CD4-positive, alpha-beta T cell (primary cell): ENCODE measurements at regions of chr12 and their contacts with region 1.

Region 1: GRCh38 chr12:47021298-47021697 is 58.1 kb upstream of the PCED1B start:
- DNase-seq: peak in 3 of 14 experiments; percentile 57 to 72 (median 67)
- ATAC-seq: peak; percentile 39
- H3K4me3 ChIP-seq: no peak overlapping the region
- H3K4me3 Mint-ChIP-seq: no peak overlapping the region
- H3K27ac ChIP-seq: no peak overlapping the region
- H3K27ac Mint-ChIP-seq: no peak overlapping the region
- H3K4me1 ChIP-seq: no peaks in the 10 kb centered on the region
- H3K4me1 Mint-ChIP-seq: no peaks in the 10 kb centered on the region
- H3K27me3 ChIP-seq: no peaks in the 10 kb centered on the region
- H3K27me3 Mint-ChIP-seq: peaks cover 20% of the 10 kb centered on the region
- CTCF ChIP-seq: peak; percentile 83

Region 2: DNA sequence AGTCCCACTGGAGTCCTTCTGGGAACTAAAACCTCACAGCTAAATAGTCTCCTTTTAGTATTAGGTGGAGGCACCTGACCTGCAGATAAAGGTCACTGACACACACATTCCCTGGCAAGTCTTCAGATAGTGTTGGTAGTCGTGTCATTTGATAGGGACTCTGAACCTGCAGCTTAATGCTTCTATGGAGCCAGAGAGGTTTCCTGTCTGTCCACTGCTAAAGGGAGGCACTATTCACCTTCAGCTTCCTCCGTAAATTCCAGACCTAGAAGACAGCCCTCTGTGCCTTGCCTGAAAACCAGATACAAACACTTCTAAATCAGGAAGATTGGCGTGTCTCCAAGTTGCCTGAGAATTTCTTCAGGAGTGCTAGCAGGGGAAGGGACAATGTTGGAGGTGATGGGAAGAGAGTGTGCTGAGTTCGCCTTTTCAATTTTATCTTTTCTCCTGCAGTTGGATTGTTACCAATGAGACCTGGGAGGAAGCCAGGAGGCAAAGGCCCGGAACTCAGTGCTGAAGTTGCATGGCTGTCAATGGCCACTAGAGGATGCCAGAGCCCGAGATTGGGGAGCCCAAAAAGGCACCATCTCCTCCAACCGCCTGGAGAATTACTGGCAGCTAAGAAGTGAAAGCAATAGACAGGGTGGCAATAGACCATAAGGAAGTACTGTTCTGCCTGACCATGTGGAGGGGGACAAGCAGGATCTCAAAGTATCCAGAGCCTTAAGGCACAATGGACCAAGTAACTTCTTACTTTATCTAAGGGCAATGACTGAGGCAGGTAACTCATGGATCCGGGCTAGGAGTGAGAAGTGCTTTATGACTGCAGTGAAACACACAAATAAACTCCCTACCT is 949.3 kb before region 1 on chr12:
- CTCF ChIA-PET with region 1: interaction called, 3 read pairs
- POLR2A ChIA-PET with region 1: no interaction called
- intact Hi-C with region 1: loop called (anchors 1 to 2 kb)
- DNase-seq: peak; percentile 32 to 77 (median 52)
- ATAC-seq: peak; percentile 96
- H3K4me3 ChIP-seq: no peak overlapping the region
- H3K4me3 Mint-ChIP-seq: no peak overlapping the region
- H3K27ac ChIP-seq: no peak overlapping the region
- H3K27ac Mint-ChIP-seq: no peak overlapping the region
- H3K4me1 ChIP-seq: no peaks in the 10 kb centered on the region
- H3K4me1 Mint-ChIP-seq: peaks cover 4% of the 10 kb centered on the region
- H3K27me3 ChIP-seq: no peaks in the 10 kb centered on the region
- H3K27me3 Mint-ChIP-seq: peaks cover 4% of the 10 kb centered on the region
- CTCF ChIP-seq: peak; percentile 88

Region 3: DNA sequence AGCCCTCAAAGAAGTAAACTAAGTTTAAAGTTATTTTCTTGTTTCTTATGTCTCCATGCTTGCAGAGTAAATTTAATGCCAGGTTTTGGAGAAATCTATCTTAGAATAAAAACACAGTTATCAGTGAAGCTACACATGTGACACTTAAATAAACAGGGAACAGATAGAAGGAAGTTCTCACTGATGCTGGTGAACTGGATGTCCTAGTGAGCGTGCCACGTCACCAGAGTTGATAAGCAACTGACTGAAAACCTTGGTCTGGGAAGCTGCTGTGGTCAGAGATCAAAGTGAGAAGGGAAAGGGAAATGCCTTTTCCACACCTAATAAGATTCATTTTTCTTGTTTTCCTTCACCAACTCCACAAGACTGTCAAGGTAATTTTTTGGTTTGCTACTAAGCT is 16.7 kb before region 1 on chr12:
- CTCF ChIA-PET with region 1: no interaction called
- POLR2A ChIA-PET with region 1: no interaction called
- intact Hi-C with region 1: no loop called
- DNase-seq: no peak
- ATAC-seq: no peak
- H3K4me3 ChIP-seq: no peak overlapping the region
- H3K4me3 Mint-ChIP-seq: no peak overlapping the region
- H3K27ac ChIP-seq: no peak overlapping the region
- H3K27ac Mint-ChIP-seq: no peak overlapping the region
- H3K4me1 ChIP-seq: no peaks in the 10 kb centered on the region
- H3K4me1 Mint-ChIP-seq: no peaks in the 10 kb centered on the region
- H3K27me3 ChIP-seq: peaks cover 4 to 6% of the 10 kb centered on the region in 2 experiments
- H3K27me3 Mint-ChIP-seq: peaks cover 51% of the 10 kb centered on the region
- CTCF ChIP-seq: no peak